Left cardiac atrium (tissue), 4 donors: ENCODE measurements at regions of chr9 and their contacts with region 1.

Region 1: GRCh38 chr9:105901514-105902109 is 207.3 kb downstream of the TMEM38B start:
- DNase-seq: peak; percentile 45
- ATAC-seq: peak; percentile 92 to 97

Region 2: DNA sequence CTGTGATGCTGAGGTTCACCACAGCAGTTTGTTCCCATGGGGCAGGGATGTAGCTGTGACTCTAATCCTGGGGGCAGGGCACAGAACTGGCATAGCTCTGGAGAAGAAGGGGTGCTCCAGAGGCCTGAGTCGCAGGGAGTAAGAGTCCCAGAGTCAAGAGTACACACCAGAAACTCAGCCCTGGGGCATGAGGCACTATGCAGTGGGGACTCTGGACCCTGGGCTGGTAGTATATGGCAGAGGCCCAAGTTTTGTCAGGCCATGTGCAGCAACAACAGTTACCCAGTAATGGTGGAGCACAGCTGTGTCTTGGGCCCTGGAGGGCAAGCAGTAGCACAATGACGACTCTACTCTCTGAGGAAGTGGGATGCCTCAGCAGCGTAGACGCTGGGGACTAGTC is 164.4 kb before region 1 on chr9:
- intact Hi-C with region 1: no loop called
- DNase-seq: no peak
- ATAC-seq: no peak

Region 3: GRCh38 chr9:107172160-107172978 is 1270.8 kb after region 1 on chr9:
- intact Hi-C with region 1: loop called in 1 of 2 experiments (anchors 2 kb)
- DNase-seq: peak; percentile 75
- ATAC-seq: peak; percentile 69 to 80